HCT116 (cell line): ENCODE measurements at regions of chr2 and their contacts with region 1.

Region 1: GRCh38 chr2:26846328-26847306 is 1.3 kb upstream of the DPYSL5 start:
- DNase-seq: peak; percentile 64
- ATAC-seq: peak; percentile 80
- H3K4me3 ChIP-seq: no peak overlapping the region; a peak in 1 of 4 replicates
- H3K27ac ChIP-seq: no peak overlapping the region
- H3K4me1 ChIP-seq: peaks cover 0 to 22% of the 10 kb centered on the region in 2 experiments; a peak in 3 of 4 replicates
- H3K27me3 ChIP-seq: no peaks in the 10 kb centered on the region
- CTCF ChIP-seq: peak; percentile 79 to 97 (median 84)
- POLR2A ChIP-seq: no peak
- RAD21 ChIP-seq: peak; percentile 97

Region 2: DNA sequence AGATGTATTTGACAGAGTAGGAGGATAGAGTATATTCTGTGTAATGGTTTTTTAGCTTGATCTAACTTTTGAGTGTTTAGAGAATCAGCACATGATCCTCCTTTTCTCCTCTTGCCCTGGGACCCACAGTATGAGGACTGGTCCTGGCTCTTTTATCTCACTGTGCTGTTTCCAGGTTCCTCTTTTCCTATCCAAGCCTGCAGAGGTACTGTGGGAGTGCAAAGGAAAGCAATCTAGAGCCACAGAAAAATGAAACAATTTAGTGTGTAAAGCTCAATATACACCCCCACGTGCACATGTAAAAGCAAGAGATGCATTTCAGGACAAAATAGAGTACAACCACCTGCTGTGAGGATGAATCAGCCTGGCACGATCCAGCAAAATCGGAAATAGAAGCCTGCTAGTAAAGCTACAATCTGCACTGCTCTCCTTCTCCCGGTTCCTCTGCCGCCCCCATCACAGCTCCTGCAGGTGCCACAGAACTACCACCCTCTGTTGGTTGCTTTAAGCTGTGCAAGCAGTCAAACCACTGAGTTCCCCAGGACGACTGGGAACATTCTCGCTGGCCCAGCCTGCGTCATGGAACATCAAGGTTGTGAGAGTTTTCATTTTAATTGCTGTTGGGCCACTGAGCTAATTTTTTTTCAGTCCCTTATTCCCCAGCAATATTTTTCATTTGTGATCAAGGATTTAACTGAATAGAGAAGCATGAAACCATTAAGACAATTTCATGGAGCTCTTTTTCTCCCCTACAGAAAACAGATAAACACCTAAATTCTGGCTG is 76.0 kb after region 1 on chr2:
- CTCF ChIA-PET with region 1: interaction called, 63 read pairs
- POLR2A ChIA-PET with region 1: no interaction called
- RAD21 ChIA-PET with region 1: interaction called, 9 to 15 read pairs
- intact Hi-C with region 1: loop called (anchors 1 kb)
- DNase-seq: peak; percentile 47
- ATAC-seq: peak; percentile 99
- H3K4me3 ChIP-seq: no peak overlapping the region
- H3K27ac ChIP-seq: no peak overlapping the region
- H3K4me1 ChIP-seq: peaks cover 4 to 9% of the 10 kb centered on the region in 2 experiments; a peak in 1 of 4 replicates
- H3K27me3 ChIP-seq: no peaks in the 10 kb centered on the region
- CTCF ChIP-seq: peak; percentile 69 to 83 (median 74)
- POLR2A ChIP-seq: no peak
- RAD21 ChIP-seq: peak; percentile 68

Region 3: DNA sequence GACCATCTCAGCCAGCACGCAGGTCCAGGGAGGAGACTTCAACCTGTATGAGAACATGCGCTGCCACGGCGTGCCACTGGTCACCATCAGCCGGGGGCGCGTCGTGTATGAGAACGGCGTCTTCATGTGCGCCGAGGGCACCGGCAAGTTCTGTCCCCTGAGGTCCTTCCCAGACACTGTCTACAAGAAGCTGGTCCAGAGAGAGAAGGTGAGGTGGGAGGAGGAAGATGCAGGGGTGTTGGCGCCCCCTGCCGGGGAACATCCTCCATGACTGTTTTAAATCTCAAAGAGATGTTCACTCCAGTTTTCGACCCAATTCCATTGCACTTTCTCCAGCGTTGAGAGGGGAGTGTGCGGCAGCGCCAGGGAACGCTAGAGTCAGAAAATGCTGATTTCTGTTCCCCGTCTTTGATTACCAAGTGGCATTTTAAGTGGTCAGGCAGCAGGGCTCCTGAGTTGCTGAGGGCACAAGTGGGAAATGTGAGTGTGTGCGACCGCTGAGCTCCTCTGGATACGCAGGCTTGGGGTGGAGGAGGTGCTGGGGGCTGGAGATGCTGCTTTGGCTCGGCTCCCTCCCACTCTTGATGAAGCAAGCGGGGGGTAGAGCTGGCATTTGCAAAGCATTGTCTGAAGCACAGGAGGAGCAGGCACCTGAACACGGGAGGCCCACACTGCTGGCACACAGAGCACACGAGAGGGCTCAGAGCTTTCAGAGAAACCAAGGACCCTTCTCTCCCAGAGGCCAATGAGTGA is 96.1 kb after region 1 on chr2:
- CTCF ChIA-PET with region 1: interaction called, 93 read pairs
- POLR2A ChIA-PET with region 1: no interaction called
- RAD21 ChIA-PET with region 1: interaction called, 13 to 16 read pairs
- intact Hi-C with region 1: loop called (anchors 1 kb)
- DNase-seq: peak; percentile 50
- ATAC-seq: peak; percentile 88
- H3K4me3 ChIP-seq: no peak overlapping the region
- H3K27ac ChIP-seq: no peak overlapping the region
- H3K4me1 ChIP-seq: peaks cover 0 to 16% of the 10 kb centered on the region in 2 experiments; a peak in 3 of 4 replicates
- H3K27me3 ChIP-seq: no peaks in the 10 kb centered on the region
- CTCF ChIP-seq: peak; percentile 80 to 90 (median 81)
- POLR2A ChIP-seq: no peak
- RAD21 ChIP-seq: peak; percentile 86

Region 4: GRCh38 chr2:27010139-27010538 is 163.5 kb after region 1 on chr2:
- CTCF ChIA-PET with region 1: interaction called, 43 read pairs
- POLR2A ChIA-PET with region 1: interaction called, 5 read pairs
- RAD21 ChIA-PET with region 1: interaction called in 1 of 2 experiments, 3 read pairs
- intact Hi-C with region 1: no loop called
- DNase-seq: no peak
- ATAC-seq: no peak
- H3K4me3 ChIP-seq: peak overlapping the region in 1 of 2 experiments; percentile 37; a peak in 2 of 4 replicates
- H3K27ac ChIP-seq: peak overlapping the region; percentile 54
- H3K4me1 ChIP-seq: peaks cover 22 to 38% of the 10 kb centered on the region in 2 experiments
- H3K27me3 ChIP-seq: no peaks in the 10 kb centered on the region
- CTCF ChIP-seq: no peak
- POLR2A ChIP-seq: no peak
- RAD21 ChIP-seq: no peak

Region 5: DNA sequence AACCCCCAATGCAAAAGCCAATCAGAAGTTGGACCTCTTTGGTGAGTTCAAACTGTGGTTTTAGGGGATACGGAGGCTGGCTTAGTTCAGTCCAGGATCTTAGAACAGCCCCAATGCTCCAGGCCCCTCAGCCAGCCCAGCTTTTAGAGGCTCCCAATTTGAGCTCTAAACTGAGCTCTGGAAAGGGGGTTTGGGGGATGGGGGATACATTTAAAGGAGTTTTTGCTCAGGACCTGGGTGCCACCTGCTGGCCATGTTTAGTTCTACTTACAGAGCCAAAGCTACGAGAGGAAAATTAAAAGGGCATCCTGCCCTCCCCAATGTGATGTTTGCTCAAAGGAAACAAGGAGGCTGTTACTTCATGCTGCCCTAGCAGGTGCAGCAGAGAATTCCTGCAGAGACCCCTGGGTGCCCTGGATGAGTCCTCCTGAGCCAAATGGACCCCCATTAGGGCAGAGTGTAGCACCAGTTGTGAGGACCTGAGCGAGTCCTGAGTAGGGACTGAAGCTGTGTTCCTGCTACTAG is 170.2 kb after region 1 on chr2:
- CTCF ChIA-PET with region 1: interaction called, 43 read pairs
- POLR2A ChIA-PET with region 1: no interaction called
- RAD21 ChIA-PET with region 1: interaction called in 1 of 2 experiments, 8 read pairs
- intact Hi-C with region 1: loop called (anchors 2 kb)
- DNase-seq: peak; percentile 50
- ATAC-seq: peak; percentile 74
- H3K4me3 ChIP-seq: no peak overlapping the region
- H3K27ac ChIP-seq: no peak overlapping the region
- H3K4me1 ChIP-seq: peaks cover 25 to 50% of the 10 kb centered on the region in 2 experiments
- H3K27me3 ChIP-seq: no peaks in the 10 kb centered on the region
- CTCF ChIP-seq: peak; percentile 68 to 85 (median 84)
- POLR2A ChIP-seq: no peak
- RAD21 ChIP-seq: peak; percentile 92

Region 6: GRCh38 chr2:27086090-27086723 is 239.6 kb after region 1 on chr2:
- CTCF ChIA-PET with region 1: interaction called, 5 read pairs
- POLR2A ChIA-PET with region 1: no interaction called
- RAD21 ChIA-PET with region 1: no interaction called
- intact Hi-C with region 1: loop called (anchors 2 kb)
- DNase-seq: peak; percentile 77
- ATAC-seq: peak; percentile 85
- H3K4me3 ChIP-seq: peak overlapping the region; percentile 57 to 61
- H3K27ac ChIP-seq: peak overlapping the region; percentile 77
- H3K4me1 ChIP-seq: peaks cover 13 to 35% of the 10 kb centered on the region in 2 experiments
- H3K27me3 ChIP-seq: no peaks in the 10 kb centered on the region
- CTCF ChIP-seq: peak in 2 of 3 experiments; percentile 53 to 73; a peak in 4 of 6 replicates
- POLR2A ChIP-seq: peak; percentile 32
- RAD21 ChIP-seq: no peak